PC-9 (cell line): ENCODE measurements at regions of chr2 and their contacts with region 1.

Region 1: DNA sequence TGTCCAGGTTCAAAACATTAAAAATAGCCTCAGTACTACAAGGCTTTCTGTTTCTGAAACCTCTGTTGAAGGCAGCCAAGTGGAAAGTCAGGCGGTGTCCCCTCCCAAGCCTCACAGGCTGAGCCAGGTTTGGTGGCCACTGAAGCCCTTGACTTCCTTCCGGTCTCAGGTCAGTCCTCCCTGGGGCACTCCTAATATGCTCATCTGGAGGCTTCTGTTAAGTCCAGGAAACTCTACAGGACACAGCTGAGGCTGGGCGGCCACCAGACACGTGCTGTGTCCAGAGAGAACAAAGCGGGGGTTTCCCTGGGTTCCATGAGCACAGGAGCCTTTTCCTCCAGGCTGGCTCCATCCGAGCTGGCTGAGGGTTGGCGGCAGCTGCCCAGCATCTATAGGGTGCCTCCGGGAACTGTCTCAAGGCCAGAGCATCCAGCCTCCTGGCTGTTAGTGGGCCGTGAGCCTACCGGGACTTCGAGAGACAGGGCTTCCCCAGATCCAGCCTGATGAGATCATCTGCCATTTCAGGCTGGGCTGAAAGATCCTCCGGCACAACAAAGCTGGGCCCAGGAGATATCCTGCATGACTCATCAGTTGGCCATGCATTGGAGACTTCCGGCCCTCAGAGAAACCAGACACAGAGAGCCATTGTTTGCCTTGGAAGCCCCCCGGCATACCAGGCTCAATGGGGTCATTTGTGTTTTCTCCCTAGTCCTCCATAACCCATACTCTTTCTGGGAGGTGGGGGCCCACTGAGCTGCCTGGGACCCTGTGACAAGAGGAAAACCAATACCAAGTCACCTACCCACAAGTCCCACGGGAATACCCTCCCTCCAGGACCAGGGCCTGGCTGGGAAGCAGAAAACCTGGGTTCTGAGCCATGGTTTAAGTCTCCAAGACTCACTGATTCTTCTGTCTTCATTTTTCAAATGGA is 71.7 kb downstream of the HS1BP3 start:
- DNase-seq: peak; percentile 76 to 89
- H3K4me3 ChIP-seq: no peak overlapping the region
- H3K27ac ChIP-seq: peak overlapping the region; percentile 94
- H3K4me1 ChIP-seq: peaks cover 64% of the 10 kb centered on the region
- H3K27me3 ChIP-seq: no peaks in the 10 kb centered on the region
- CTCF ChIP-seq: no peak

Region 2: GRCh38 chr2:20350041-20350712 is 229.0 kb before region 1 on chr2:
- CTCF ChIA-PET with region 1: no interaction called
- POLR2A ChIA-PET with region 1: interaction called, 10 read pairs
- intact Hi-C with region 1: no loop called
- DNase-seq: no peak
- H3K4me3 ChIP-seq: peak overlapping the region; percentile 81
- H3K27ac ChIP-seq: peak overlapping the region; percentile 88
- H3K4me1 ChIP-seq: peaks cover 47% of the 10 kb centered on the region
- H3K27me3 ChIP-seq: no peaks in the 10 kb centered on the region
- CTCF ChIP-seq: no peak

Region 3: DNA sequence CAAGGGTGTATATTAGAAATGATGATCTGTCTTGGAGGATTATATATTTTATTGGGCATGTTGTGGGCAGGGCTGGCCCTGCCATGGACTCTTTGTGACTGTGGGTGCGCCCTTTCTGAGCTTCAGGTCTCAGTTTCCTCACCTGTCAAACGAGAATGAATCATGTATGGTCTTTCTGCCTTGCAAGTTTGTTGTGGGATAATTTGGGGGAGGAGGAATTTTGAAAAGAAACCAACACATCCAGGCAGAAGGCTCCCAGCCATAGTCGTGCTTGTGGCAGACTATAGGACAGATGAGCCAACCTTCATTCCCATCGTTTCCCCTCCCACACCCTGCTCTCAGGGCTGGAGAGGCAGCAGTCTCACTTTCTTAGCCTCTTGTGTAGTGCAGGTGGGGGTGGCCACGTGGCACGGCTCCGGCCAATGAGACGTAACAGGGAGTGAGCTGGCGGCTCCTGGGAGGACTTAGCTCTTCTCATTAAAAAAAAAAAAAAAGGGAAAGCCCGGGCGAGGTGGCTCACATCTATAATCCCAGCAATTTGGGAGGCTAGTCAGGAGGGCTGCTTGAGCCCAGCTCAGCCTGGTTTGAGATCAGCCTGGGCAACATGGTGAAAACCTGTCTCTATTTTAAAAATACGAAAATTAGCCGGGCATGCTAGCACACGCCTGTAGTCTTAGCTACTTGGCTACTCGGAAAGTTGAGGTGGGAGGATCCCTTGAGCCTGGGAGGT is 69.2 kb before region 1 on chr2:
- CTCF ChIA-PET with region 1: no interaction called
- POLR2A ChIA-PET with region 1: no interaction called
- intact Hi-C with region 1: loop called (anchors 2 kb)
- DNase-seq: peak; percentile 37 to 76
- H3K4me3 ChIP-seq: no peak overlapping the region
- H3K27ac ChIP-seq: no peak overlapping the region
- H3K4me1 ChIP-seq: peaks cover 10% of the 10 kb centered on the region
- H3K27me3 ChIP-seq: no peaks in the 10 kb centered on the region
- CTCF ChIP-seq: no peak

Region 4: GRCh38 chr2:20525041-20526035 is 53.8 kb before region 1 on chr2:
- CTCF ChIA-PET with region 1: no interaction called
- POLR2A ChIA-PET with region 1: interaction called, 7 read pairs
- intact Hi-C with region 1: loop called (anchors 1 kb)
- DNase-seq: peak; percentile 68 to 94
- H3K4me3 ChIP-seq: no peak overlapping the region
- H3K27ac ChIP-seq: peak overlapping the region; percentile 70
- H3K4me1 ChIP-seq: peaks cover 41% of the 10 kb centered on the region
- H3K27me3 ChIP-seq: no peaks in the 10 kb centered on the region
- CTCF ChIP-seq: no peak; the same call in 1 of the 2 replicates

Region 5: GRCh38 chr2:20595431-20596192 is 16.5 kb after region 1 on chr2:
- CTCF ChIA-PET with region 1: no interaction called
- POLR2A ChIA-PET with region 1: no interaction called
- intact Hi-C with region 1: loop called (anchors 1 kb)
- DNase-seq: peak; percentile 25 to 92
- H3K4me3 ChIP-seq: peak overlapping the region; percentile 5; the same call in 1 of the 2 replicates
- H3K27ac ChIP-seq: peak overlapping the region; percentile 96
- H3K4me1 ChIP-seq: peaks cover 76% of the 10 kb centered on the region
- H3K27me3 ChIP-seq: no peaks in the 10 kb centered on the region
- CTCF ChIP-seq: no peak; the same call in 1 of the 2 replicates